ENCODE measurements at regions of chr6 and their contacts with region 1.

Region 1: GRCh38 chr6:33200219-33201146 is at the starts of genes RXRB and SLC39A7:
- DNase-seq: peak; percentile 97 to 99 (median 98)

Region 2: GRCh38 chr6:32838114-32838958 is 362.1 kb before region 1 on chr6 and contains the start of gene TAP2:
- intact Hi-C with region 1: no loop called
- DNase-seq: peak; percentile 90 to 99 (median 96)

Region 3: GRCh38 chr6:32947552-32948465 is 252.7 kb before region 1 on chr6:
- intact Hi-C with region 1: no loop called
- DNase-seq: no peak

Region 4: DNA sequence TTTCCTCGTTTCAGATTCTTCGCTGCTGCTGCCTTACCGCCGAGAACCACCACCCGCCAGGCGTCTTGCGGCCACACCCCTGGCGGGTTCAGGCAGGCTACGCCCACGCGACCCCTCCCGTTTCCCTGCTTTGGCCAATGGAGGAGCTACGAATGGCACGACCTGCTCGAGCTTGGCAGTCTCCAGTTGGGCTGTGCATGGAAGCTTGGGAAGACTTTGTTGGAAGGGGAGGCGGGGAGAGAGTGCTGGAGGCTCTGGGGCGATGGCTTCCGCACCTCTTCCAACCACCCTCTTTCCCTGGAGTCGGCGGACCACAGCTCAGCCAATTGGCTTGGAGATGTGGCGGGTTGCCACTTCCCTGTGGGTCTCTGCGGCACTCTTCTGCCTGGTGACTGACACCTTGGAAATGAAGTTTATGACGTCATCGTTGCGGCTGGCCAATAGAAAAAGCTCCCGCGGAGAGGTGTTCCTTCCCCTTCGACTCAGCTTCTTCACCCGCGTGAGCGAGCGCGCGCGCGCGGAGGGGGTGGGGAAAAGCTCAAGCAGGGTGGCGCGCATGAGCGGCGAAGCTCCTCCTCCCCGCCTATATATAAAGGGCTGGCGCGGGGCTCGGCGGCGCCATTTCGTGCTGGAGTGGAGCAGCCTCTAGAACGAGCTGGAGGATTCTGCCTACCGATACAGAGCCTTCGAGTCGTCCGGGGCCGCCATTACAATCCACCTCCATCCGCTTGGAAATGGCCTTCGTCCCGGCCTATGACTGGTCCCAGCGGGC is 228.7 kb before region 1 on chr6:
- intact Hi-C with region 1: loop called (anchors 5 kb)
- DNase-seq: peak; percentile 99 to 100 (median 99)

Region 5: GRCh38 chr6:33161354-33162331 is 38.8 kb before region 1 on chr6:
- intact Hi-C with region 1: loop called (anchors 1 kb)
- DNase-seq: peak; percentile 57 to 96 (median 80)

Measured in posterior cingulate gyrus (tissue), 11 donors.